T-cell (primary cell): ENCODE measurements at regions of chr9 and their contacts with region 1.

Region 1: GRCh38 chr9:94173632-94174031 is 85.5 kb upstream of the ZNF169 start:
- DNase-seq: no peak
- ATAC-seq: no peak
- H3K4me3 ChIP-seq: no peak overlapping the region
- H3K4me3 Mint-ChIP-seq: peak overlapping the region in 2 of 3 donors; percentile 18 to 48
- H3K27ac ChIP-seq: no peak overlapping the region
- H3K27ac Mint-ChIP-seq: peak overlapping the region; percentile 32 to 71
- H3K4me1 ChIP-seq: peaks cover 31 to 36% of the 10 kb centered on the region in 2 experiments
- H3K4me1 Mint-ChIP-seq: peaks cover 80 to 87% (median 82%) of the 10 kb centered on the region in 3 donors
- H3K27me3 ChIP-seq: no peaks in the 10 kb centered on the region
- H3K27me3 Mint-ChIP-seq: no peaks in the 10 kb centered on the region

Region 2: DNA sequence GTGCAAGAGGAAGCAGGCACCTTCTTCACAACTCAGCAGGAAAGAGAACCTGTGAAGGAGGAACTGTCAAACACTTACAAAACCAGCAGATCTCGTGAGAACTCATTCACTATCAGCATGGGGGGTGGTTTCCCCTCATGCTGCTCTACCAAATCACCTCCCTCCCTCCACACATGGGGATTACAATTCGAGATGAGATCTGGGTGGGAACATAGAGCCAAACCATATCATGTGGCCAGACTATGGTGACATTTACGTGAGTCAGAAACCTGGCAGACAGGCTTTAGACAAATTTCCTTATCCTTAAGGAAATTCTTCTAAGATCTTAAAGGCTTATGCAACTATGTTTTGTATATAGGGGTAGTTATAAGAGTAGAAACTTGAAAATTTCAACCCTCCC is 544.1 kb after region 1 on chr9:
- CTCF ChIA-PET with region 1: no interaction called
- POLR2A ChIA-PET with region 1: interaction called in 1 of 2 experiments, 10 read pairs
- DNase-seq: no peak
- ATAC-seq: no peak
- H3K4me3 ChIP-seq: no peak overlapping the region
- H3K4me3 Mint-ChIP-seq: no peak overlapping the region
- H3K27ac ChIP-seq: no peak overlapping the region
- H3K27ac Mint-ChIP-seq: no peak overlapping the region
- H3K4me1 ChIP-seq: no peaks in the 10 kb centered on the region
- H3K4me1 Mint-ChIP-seq: no peaks in the 10 kb centered on the region
- H3K27me3 ChIP-seq: no peaks in the 10 kb centered on the region
- H3K27me3 Mint-ChIP-seq: peaks cover 19 to 36% of the 10 kb centered on the region in 2 donors